Ascending aorta (tissue), 2 donors: ENCODE measurements at regions of chr19 and their contacts with region 1.

Region 1: GRCh38 chr19:1507763-1508509 is 4.9 kb downstream of the ADAMTSL5 start:
- DNase-seq: peak; percentile 70 to 95
- H3K4me3 ChIP-seq: peak overlapping the region; percentile 14 to 66
- H3K27ac ChIP-seq: peak overlapping the region; percentile 83 to 96
- H3K4me1 ChIP-seq: peaks cover 6 to 15% of the 10 kb centered on the region in 2 donors
- H3K27me3 ChIP-seq: peaks cover 12% of the 10 kb centered on the region
- CTCF ChIP-seq: no peak

Region 2: DNA sequence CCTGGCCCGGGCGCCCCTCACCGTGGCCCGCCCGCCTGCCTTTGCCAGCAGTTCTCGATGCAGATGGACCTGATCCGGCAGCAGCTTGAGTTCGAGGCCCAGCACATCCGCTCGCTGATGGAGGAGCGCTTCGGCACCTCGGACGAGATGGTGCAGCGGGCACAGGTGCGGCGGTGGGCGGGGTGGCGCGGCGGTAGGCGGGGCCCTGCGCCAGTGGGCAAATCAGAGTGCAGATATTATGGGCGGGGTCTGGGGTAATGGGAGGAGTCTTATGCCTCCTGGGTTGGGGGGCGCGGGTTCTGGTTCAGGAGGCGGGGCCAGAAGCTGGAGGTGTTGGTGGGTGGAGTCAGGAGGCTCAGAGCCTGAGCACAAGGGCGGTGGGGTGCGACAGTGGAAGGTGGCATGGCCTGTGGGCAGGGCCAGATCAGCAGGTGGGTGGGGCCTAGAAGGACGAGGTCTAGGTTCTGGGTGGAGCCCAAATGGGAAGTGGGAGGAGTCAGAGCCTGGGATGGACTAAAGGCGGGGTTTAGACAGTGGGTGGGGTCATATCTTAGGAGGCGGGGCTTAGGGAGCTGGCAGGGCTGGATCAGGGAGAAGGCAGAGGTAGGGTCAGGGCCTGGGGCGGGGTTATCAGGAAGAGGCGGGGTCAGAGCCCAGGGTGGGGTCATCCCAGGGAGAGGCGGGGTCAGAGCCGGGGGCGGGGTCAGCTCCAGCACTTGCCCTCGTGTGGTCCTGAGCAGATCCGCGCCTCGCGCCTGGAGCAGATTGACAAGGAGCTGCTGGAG is 52.4 kb before region 1 on chr19:
- intact Hi-C with region 1: no loop called
- DNase-seq: no peak
- H3K4me3 ChIP-seq: no peak overlapping the region
- H3K27ac ChIP-seq: no peak overlapping the region
- H3K4me1 ChIP-seq: peaks cover 11 to 14% of the 10 kb centered on the region in 2 donors
- H3K27me3 ChIP-seq: peaks cover 34% of the 10 kb centered on the region
- CTCF ChIP-seq: no peak

Region 3: DNA sequence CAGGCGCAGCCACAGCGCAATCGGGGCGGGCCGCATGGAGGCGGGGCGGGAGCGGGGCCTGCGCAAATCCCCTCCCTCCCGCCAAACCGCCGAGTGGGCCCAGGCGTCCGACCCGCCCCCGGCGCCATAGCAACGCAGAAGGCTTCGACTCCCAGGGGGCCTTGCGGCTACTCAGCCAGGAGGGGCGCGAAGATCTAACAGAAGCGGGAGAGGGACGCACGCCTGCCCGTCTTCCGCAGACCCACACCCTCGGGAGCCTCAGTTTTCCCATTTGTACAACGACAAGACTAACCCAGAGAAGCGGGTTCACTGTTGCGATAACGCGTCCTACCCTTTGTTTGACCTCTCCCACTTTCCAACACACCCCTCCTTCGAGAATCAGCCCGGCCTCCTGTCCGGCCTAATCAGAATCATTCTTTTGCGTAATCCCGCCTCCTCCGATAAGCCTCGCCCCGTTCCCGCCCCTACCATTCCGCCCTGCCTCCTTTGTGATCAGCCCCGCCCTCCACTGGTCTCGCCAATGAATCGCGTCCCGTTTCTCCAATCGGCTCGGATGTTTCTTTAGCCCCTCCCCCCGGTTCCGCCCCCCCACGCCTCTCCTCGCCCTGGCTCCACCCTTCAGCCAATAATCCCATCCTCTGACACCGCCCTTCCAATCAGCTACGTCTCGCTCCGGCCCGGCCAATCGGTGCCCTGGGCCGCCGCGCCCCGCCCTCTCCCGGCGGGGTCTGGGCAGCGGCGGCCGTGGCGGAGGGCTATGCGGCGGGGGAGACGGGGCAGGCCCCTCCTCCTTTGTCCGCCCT is 17.4 kb before region 1 on chr19 and contains the start of gene PCSK4:
- intact Hi-C with region 1: loop called (anchors 1 kb)
- DNase-seq: peak; percentile 95 to 99
- H3K4me3 ChIP-seq: peak within 1 kb of the TSS; percentile 64 to 82
- H3K27ac ChIP-seq: peak within 1 kb of the TSS; percentile 22 to 67
- H3K4me1 ChIP-seq: peaks cover 8 to 14% of the 10 kb centered on the region in 2 donors
- H3K27me3 ChIP-seq: no peaks in the 10 kb centered on the region
- CTCF ChIP-seq: peak in 1 of 3 experiments; percentile 5
- total RNA-seq, gene PCSK4: 1.5 TPM